Vagina (tissue), 2 donors: ENCODE measurements at regions of chr10 and their contacts with region 1.

Region 1: GRCh38 chr10:103685880-103686669 is 169.3 kb downstream of the SH3PXD2A start:
- DNase-seq: no peak
- H3K4me3 ChIP-seq: no peak overlapping the region
- H3K27ac ChIP-seq: peak overlapping the region; percentile 94
- H3K4me1 ChIP-seq: peaks cover 30% of the 10 kb centered on the region
- H3K27me3 ChIP-seq: no peaks in the 10 kb centered on the region
- CTCF ChIP-seq: peak; percentile 90 to 99 (median 91)
- POLR2A ChIP-seq: no peak

Region 2: DNA sequence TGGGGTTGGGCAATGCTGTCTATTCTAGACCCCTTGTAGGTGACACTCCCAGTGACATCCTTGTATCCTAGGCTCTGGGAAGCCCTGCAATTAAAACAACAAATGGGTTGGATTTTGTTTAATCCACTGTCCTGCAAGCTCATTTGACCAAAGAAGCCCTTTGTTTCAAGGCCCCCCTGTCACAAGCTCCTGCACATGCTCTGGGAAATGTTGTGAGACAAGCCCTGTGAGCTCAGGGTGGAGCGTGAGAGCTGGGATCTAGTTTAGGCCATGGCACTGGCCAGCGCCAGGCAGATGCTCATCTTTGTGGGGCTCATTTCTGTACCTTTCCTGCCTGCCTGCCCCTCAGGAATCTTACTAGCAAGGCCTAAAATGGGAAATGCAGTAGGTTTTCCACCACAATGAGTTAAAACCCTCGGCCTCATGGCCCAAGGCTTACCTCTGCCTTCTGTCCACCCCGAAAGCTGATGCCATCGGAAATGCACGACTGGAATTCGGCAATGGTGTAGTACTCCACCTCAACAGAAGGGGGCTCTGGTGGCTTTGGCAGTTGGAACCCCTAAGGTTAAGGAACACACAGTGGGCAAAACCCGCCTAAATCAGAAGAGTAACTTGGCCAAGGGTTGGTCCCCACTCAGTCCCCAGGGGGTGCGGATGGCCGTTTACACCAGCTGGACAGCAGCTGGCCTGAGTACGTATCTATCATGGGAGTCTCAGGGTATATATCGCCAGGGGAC is 80.5 kb before region 1 on chr10:
- intact Hi-C with region 1: loop called (anchors 2 kb)
- DNase-seq: no peak
- H3K4me3 ChIP-seq: no peak overlapping the region
- H3K27ac ChIP-seq: peak overlapping the region; percentile 72
- H3K4me1 ChIP-seq: peaks cover 18% of the 10 kb centered on the region
- H3K27me3 ChIP-seq: no peaks in the 10 kb centered on the region
- CTCF ChIP-seq: peak; percentile 46 to 68 (median 55)
- POLR2A ChIP-seq: no peak